PC-3 (cell line): ENCODE measurements at regions of chr5 and their contacts with region 1.

Region 1: GRCh38 chr5:65837139-65837538 is 89.2 kb upstream of the ERBIN start:
- DNase-seq: peak; percentile 38
- ATAC-seq: no peak; the same call in 1 of the 2 replicates
- H3K4me3 ChIP-seq: no peak overlapping the region
- H3K27ac ChIP-seq: peak overlapping the region; percentile 11; the same call in 1 of the 2 replicates
- H3K4me1 ChIP-seq: peaks cover 12% of the 10 kb centered on the region
- H3K27me3 ChIP-seq: no peaks in the 10 kb centered on the region
- CTCF ChIP-seq: no peak

Region 2: DNA sequence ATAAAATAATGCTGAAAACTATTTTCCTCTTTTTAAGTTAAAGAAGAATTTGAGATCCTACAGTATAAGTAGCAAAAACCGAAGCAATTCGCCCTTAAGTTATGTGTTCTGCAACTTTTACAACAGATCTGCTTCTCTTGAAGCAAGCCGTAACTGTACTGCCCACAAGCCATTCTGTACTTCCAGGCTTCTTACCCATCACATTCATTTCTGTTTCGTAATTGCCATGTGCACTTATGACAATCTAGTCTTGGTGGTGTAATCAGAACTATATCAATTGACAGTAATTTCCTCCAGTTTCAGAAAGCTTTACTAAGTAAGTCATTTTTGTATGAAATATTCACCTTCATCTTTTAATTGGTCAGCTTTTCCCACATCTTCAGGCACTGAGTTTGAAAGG is 129.0 kb before region 1 on chr5:
- CTCF ChIA-PET with region 1: no interaction called
- POLR2A ChIA-PET with region 1: no interaction called
- intact Hi-C with region 1: no loop called
- DNase-seq: no peak
- ATAC-seq: no peak
- H3K4me3 ChIP-seq: no peak overlapping the region
- H3K27ac ChIP-seq: no peak overlapping the region
- H3K4me1 ChIP-seq: no peaks in the 10 kb centered on the region
- H3K27me3 ChIP-seq: no peaks in the 10 kb centered on the region
- CTCF ChIP-seq: no peak

Region 3: DNA sequence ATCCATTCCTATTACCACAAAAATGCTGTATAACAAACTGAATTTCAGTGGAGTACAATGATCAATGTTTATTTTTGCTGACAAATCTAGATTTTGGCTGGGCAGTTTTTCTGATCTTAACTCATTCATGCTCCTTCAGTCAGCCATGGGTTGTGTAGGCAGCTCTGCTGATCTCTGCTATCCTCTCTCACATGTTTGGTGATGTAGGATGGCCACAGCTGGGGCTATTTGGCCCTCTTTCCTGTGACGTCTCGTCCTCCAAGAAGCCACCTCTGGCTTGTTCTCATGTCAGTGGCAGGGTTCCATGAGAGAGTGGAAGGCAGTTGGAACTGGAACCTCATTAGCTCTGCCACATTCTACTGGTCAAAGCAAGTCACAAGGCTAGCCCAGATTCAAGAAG is 106.2 kb before region 1 on chr5:
- CTCF ChIA-PET with region 1: no interaction called
- POLR2A ChIA-PET with region 1: no interaction called
- intact Hi-C with region 1: no loop called
- DNase-seq: no peak
- ATAC-seq: no peak
- H3K4me3 ChIP-seq: no peak overlapping the region
- H3K27ac ChIP-seq: no peak overlapping the region
- H3K4me1 ChIP-seq: peaks cover 5% of the 10 kb centered on the region; the same call in 1 of the 2 replicates
- H3K27me3 ChIP-seq: no peaks in the 10 kb centered on the region
- CTCF ChIP-seq: no peak

Region 4: DNA sequence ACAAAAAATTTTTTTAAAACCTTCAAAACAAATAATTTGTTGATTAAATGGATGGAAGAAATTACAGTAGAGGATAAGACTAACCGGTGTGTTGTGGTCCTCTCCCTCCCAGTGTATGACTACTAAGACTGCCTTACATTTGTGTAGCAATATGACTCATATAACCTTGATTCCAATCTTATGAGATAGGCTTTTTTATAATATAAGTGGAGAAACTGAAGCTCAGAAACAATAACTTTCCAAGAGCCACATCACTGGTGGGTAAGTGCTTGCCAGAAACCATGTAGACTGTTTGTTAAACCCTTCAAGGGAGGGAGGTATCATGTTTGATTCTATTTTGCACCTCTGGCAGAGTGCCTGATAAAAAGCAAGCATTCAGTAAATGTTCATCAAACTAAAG is 67.6 kb before region 1 on chr5:
- CTCF ChIA-PET with region 1: no interaction called
- POLR2A ChIA-PET with region 1: no interaction called
- intact Hi-C with region 1: loop called (anchors 2 kb)
- DNase-seq: peak; percentile 67
- ATAC-seq: peak; percentile 93
- H3K4me3 ChIP-seq: no peak overlapping the region
- H3K27ac ChIP-seq: peak overlapping the region; percentile 69
- H3K4me1 ChIP-seq: peaks cover 21% of the 10 kb centered on the region
- H3K27me3 ChIP-seq: no peaks in the 10 kb centered on the region
- CTCF ChIP-seq: no peak

Region 5: GRCh38 chr5:65779643-65780042 is 57.5 kb before region 1 on chr5:
- CTCF ChIA-PET with region 1: no interaction called
- POLR2A ChIA-PET with region 1: no interaction called
- intact Hi-C with region 1: no loop called
- DNase-seq: no peak
- ATAC-seq: no peak
- H3K4me3 ChIP-seq: no peak overlapping the region
- H3K27ac ChIP-seq: no peak overlapping the region
- H3K4me1 ChIP-seq: no peaks in the 10 kb centered on the region
- H3K27me3 ChIP-seq: no peaks in the 10 kb centered on the region
- CTCF ChIP-seq: no peak

Region 6: DNA sequence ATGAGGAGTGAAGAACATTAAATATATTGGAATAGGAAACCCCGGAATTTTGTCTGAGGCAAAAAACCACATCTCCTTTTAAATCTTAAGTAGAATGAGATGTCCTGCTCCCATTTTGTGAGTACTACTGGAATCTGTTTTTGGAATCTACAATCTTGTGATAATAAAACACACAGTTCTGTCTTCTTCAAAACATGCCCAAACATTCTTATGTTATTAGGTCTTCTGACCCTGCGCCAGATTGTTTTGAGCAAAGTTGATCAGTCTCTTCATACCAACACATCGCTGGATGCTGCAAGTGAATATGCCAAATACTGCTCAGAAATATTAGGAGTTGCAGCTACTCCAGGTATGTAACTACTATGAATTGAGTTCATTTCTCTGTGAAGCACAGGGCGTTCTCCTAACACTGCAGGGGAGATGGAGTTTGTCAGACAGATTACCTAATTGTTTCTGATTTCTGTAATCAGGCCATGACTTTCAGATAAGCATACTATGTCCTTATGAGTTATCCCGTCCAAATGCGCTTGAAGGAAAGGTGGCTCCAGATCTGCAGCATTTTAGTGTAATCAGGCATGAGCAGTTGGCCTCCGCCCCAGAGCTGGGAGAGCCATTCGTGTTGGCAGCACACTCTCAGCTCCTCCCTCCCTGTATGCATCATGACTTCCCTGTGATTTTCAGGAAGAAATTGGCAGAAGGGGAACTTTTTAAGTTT is 27.2 kb before region 1 on chr5:
- CTCF ChIA-PET with region 1: no interaction called
- POLR2A ChIA-PET with region 1: interaction called, 6 read pairs
- intact Hi-C with region 1: loop called (anchors 1 kb)
- DNase-seq: peak; percentile 71
- ATAC-seq: peak; percentile 82
- H3K4me3 ChIP-seq: no peak overlapping the region
- H3K27ac ChIP-seq: peak overlapping the region; percentile 97
- H3K4me1 ChIP-seq: peaks cover 42% of the 10 kb centered on the region
- H3K27me3 ChIP-seq: no peaks in the 10 kb centered on the region
- CTCF ChIP-seq: no peak

Region 7: DNA sequence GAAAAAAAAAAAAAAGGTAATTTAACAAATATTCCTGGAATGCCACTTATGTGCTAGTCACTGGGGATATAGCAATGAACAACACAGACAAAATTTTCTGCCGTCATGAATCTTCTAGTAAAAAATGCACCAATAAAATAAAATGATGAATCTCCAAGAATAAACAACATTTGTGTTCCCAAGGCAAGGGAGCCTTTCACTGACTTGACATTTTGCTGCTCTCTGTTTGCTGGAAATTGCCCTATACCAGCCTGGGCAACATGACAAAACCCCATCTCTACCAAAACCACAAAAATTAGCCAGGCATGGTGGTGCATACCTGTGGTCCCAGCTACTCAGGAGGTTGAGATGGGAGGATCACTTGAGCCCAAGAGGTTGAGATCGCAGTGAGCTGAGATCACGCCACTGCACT is 24.7 kb after region 1 on chr5:
- CTCF ChIA-PET with region 1: no interaction called
- POLR2A ChIA-PET with region 1: interaction called, 29 read pairs
- intact Hi-C with region 1: no loop called
- DNase-seq: peak; percentile 81
- ATAC-seq: peak; percentile 90
- H3K4me3 ChIP-seq: no peak overlapping the region
- H3K27ac ChIP-seq: peak overlapping the region; percentile 97
- H3K4me1 ChIP-seq: peaks cover 40% of the 10 kb centered on the region
- H3K27me3 ChIP-seq: no peaks in the 10 kb centered on the region
- CTCF ChIP-seq: no peak